ENCODE measurements at regions of chr5 and their contacts with region 1.

Region 1: GRCh38 chr5:62297026-62297425 is 9.0 kb upstream of the KIF2A start:
- DNase-seq: no peak
- H3K4me3 ChIP-seq: no peak overlapping the region
- H3K27ac ChIP-seq: no peak overlapping the region
- H3K4me1 ChIP-seq: no peaks in the 10 kb centered on the region
- H3K27me3 ChIP-seq: no peaks in the 10 kb centered on the region
- CTCF ChIP-seq: no peak
- EP300 ChIP-seq: no peak
- POLR2A ChIP-seq: no peak

Region 2: GRCh38 chr5:60687927-60688720 is 1608.9 kb before region 1 on chr5:
- intact Hi-C with region 1: loop called in 1 of 4 experiments (anchors 5 kb)
- DNase-seq: no peak
- H3K4me3 ChIP-seq: no peak overlapping the region
- H3K27ac ChIP-seq: no peak overlapping the region
- H3K4me1 ChIP-seq: no peaks in the 10 kb centered on the region
- H3K27me3 ChIP-seq: no peaks in the 10 kb centered on the region
- CTCF ChIP-seq: no peak
- EP300 ChIP-seq: no peak
- POLR2A ChIP-seq: no peak